GM23248 (cell line): ENCODE measurements at regions of chr12 and their contacts with region 1.

Region 1: GRCh38 chr12:98998697-98999299 is 353.7 kb downstream of the APAF1 start:
- DNase-seq: peak; percentile 68
- H3K4me3 ChIP-seq: no peak overlapping the region
- H3K27ac ChIP-seq: no peak overlapping the region
- H3K4me1 ChIP-seq: no peaks in the 10 kb centered on the region
- H3K27me3 ChIP-seq: no peaks in the 10 kb centered on the region; the same call in 1 of the 2 replicates

Region 2: DNA sequence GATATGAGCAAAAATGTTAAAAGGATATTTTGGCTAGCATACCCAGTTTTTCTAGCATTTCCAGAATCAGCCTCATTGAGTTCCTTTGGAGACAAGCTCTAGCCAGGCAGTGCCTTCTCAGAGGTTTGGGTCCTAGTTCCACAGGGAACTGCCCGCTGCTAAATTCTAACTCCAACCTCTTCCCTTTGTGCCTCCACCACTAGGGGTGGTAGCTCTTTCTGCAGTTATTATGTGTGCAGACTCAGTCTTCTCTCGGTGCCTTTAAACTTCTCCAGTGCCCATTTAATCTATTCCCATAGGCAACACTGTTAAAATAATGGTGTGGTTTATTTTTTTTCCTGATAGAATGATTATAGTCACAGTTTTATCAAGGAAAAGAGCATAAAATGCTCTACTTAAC is 426.8 kb before region 1 on chr12:
- in situ Hi-C with region 1: loop called (anchors 25 kb)
- DNase-seq: no peak
- H3K4me3 ChIP-seq: no peak overlapping the region
- H3K27ac ChIP-seq: no peak overlapping the region
- H3K4me1 ChIP-seq: no peaks in the 10 kb centered on the region
- H3K27me3 ChIP-seq: no peaks in the 10 kb centered on the region

Region 3: DNA sequence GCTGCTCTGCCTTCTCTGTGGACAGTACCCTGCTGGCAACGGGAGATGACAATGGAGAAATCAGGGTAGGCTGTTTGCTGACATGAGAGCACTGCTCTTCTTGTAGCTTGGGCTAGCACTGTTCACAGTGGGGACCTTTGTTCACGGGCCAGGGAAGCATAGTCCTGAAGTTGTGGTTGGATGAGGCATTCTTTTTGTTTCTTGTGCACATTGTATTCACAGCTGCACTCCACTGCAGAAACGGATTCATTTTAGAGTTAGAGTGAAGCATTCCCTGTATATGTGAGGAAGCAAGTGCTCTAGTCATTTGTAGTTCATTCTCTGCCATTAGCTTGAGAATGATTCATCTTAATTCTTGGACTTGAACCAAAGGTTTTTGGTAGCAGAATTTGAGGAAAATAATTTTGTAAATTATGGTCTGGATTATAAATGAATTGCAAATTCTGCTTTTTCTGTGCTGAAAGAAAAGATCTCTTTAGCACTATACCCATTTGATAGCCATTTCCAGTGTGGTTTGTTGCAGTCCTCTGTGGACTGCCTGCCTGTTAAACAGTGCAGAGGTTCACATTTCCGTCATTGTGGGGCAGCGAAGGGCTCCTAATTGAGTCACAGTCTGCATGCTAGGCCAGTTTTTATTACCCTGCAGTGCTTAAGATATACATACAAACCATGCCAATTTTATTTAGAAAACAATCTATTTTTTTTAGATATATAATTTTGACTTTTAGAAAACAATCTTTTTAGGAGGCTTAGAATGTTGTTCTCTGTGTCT is 273.1 kb before region 1 on chr12:
- in situ Hi-C with region 1: loop called (anchors 10 kb)
- DNase-seq: peak; percentile 84
- H3K4me3 ChIP-seq: no peak overlapping the region
- H3K27ac ChIP-seq: peak overlapping the region; percentile 30; the same call in 1 of the 2 replicates
- H3K4me1 ChIP-seq: peaks cover 19% of the 10 kb centered on the region
- H3K27me3 ChIP-seq: no peaks in the 10 kb centered on the region